SK-N-SH (cell line): ENCODE measurements at regions of chr3 and their contacts with region 1.

Region 1: DNA sequence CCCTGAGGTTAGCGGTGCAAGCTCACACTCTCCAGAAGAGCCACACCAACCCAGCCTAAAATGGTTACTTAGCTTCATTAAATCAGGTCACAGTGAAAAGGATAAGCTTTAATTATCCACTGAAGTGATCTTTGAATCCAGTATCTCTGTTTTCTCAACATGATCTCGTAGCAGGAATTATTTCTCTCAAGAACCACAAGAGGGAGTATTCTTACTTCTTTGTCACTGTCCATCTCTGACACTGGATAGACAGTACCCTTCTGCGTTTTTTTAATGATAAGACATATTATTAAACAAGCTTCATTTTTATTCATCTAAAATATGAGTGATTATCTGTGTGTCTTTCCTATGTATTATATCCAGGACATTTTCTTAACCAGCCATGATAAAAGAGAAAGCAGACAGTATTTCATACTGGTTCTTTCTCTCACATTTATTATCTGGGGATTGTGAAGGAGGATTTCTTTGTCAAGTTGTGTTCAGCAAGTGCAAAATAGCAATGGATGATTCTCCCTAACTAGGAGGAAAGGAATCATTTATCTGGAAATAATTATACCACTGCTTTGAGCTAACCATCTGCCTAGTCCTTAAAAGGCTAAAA is 105.4 kb upstream of the CCDC54 start:
- DNase-seq: peak; percentile 36
- H3K4me3 ChIP-seq: no peak overlapping the region
- H3K27ac ChIP-seq: no peak overlapping the region
- H3K4me1 ChIP-seq: no peaks in the 10 kb centered on the region; a peak in 1 of 4 replicates
- H3K27me3 ChIP-seq: no peaks in the 10 kb centered on the region
- CTCF ChIP-seq: peak; percentile 81
- EP300 ChIP-seq: no peak
- RAD21 ChIP-seq: peak; percentile 86

Region 2: GRCh38 chr3:107235928-107236315 is 36.0 kb before region 1 on chr3:
- CTCF ChIA-PET with region 1: interaction called, 53 read pairs
- POLR2A ChIA-PET with region 1: no interaction called
- DNase-seq: peak; percentile 75
- H3K4me3 ChIP-seq: peak overlapping the region; percentile 37 to 53
- H3K27ac ChIP-seq: peak overlapping the region; percentile 45 to 62; a peak in 3 of 4 replicates
- H3K4me1 ChIP-seq: peaks cover 0 to 10% of the 10 kb centered on the region in 2 experiments; a peak in 2 of 4 replicates
- H3K27me3 ChIP-seq: no peaks in the 10 kb centered on the region
- CTCF ChIP-seq: peak; percentile 95
- EP300 ChIP-seq: no peak
- RAD21 ChIP-seq: peak; percentile 99

Region 3: DNA sequence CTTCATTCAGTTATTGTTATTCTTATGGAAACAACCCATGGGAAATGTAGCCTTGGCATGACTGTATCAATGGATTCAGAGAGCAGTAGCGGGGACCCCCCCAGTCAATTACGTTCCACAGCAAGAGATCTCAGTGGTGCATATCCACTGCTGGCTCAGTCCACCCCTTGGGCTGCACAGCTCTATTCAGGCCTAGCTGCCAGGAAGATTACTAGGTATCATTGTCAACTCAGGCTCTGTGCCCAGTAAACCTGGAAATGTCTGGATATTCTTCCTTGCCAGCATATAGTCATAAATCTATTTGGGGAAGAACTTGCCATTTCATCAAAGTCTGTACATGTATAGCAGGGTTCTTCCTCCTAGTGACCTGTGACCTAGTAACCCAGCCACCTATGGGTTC is 22.8 kb before region 1 on chr3:
- CTCF ChIA-PET with region 1: interaction called, 15 read pairs
- POLR2A ChIA-PET with region 1: no interaction called
- DNase-seq: no peak
- H3K4me3 ChIP-seq: no peak overlapping the region
- H3K27ac ChIP-seq: no peak overlapping the region
- H3K4me1 ChIP-seq: peaks cover 0 to 2% of the 10 kb centered on the region in 2 experiments; a peak in 1 of 4 replicates
- H3K27me3 ChIP-seq: no peaks in the 10 kb centered on the region
- CTCF ChIP-seq: no peak
- EP300 ChIP-seq: no peak
- RAD21 ChIP-seq: no peak

Region 4: DNA sequence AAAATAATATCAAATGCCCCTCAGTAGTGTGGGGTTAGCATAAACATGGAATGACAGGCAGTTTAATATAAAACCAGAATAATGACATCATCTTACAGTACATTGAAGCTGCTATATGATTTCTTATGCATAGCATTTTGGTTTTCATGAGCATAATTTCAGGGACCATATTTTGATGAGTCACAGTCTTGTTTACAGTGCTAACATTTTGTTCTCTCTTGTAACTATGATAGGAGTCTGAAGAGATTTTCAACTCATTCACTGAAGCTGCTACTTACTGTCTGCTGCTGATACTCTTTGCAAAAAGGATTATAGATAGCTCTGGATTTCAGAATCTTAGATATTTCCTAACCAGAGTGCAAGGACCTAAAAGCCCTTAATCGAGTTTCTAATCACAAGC is 12.7 kb after region 1 on chr3:
- CTCF ChIA-PET with region 1: interaction called, 36 read pairs
- POLR2A ChIA-PET with region 1: no interaction called
- DNase-seq: no peak
- H3K4me3 ChIP-seq: no peak overlapping the region
- H3K27ac ChIP-seq: no peak overlapping the region
- H3K4me1 ChIP-seq: no peaks in the 10 kb centered on the region
- H3K27me3 ChIP-seq: no peaks in the 10 kb centered on the region
- CTCF ChIP-seq: no peak
- EP300 ChIP-seq: no peak
- RAD21 ChIP-seq: no peak

Region 5: GRCh38 chr3:107414325-107414964 is 142.6 kb after region 1 on chr3:
- CTCF ChIA-PET with region 1: interaction called, 85 read pairs
- POLR2A ChIA-PET with region 1: no interaction called
- DNase-seq: no peak
- H3K4me3 ChIP-seq: no peak overlapping the region
- H3K27ac ChIP-seq: no peak overlapping the region
- H3K4me1 ChIP-seq: peaks cover 0 to 4% of the 10 kb centered on the region in 2 experiments; a peak in 2 of 4 replicates
- H3K27me3 ChIP-seq: no peaks in the 10 kb centered on the region
- CTCF ChIP-seq: no peak
- EP300 ChIP-seq: no peak
- RAD21 ChIP-seq: no peak

Region 6: DNA sequence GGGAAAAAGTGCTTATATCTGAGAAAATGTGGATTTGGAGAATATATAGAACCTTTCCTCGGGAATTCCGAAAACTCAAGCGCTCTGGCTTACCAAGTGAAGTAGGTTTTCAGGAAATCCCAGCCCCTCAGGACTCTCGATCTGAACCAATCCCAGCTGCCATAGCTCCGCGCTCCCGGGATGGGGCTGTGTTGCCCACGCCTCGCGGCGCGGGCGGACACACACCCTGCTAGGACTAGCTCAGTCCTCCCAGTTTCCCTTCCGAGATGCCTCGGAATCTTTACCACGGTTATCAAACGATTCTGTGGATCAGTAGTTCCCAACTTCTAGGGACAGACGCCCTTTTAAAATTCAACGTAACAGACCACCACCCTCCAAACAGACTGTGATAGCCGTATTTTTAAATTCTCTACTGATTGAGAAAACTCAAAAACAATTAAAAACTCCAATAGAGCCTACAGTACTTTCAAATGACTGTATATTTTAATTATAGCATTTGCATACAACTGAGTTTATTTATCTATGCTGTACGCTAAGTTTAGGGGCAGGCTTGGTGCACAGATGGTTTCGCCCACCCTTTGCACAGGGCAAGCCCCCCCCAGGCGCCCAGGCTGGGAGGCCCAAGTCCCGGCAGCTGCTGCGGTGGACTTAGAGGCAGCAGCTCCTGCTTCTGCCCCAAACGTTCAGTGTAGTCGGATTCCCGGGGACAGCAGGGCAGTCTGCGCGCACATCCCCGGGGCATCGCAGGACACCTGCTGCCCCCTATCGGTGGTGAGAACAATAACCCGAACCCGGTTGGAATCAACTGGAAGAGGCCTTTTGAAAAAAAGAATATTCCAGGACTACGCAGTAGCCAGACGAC is 157.7 kb after region 1 on chr3:
- CTCF ChIA-PET with region 1: interaction called, 21 read pairs
- POLR2A ChIA-PET with region 1: no interaction called
- DNase-seq: peak; percentile 82
- H3K4me3 ChIP-seq: no peak overlapping the region; a peak in 1 of 4 replicates
- H3K27ac ChIP-seq: no peak overlapping the region
- H3K4me1 ChIP-seq: peaks cover 7 to 8% of the 10 kb centered on the region in 2 experiments; a peak in 3 of 4 replicates
- H3K27me3 ChIP-seq: no peaks in the 10 kb centered on the region
- CTCF ChIP-seq: peak; percentile 55
- EP300 ChIP-seq: no peak
- RAD21 ChIP-seq: peak; percentile 46